Mammary epithelial cell (primary cell): ENCODE measurements at regions of chr7 and their contacts with region 1.

Region 1: GRCh38 chr7:102836191-102836919 is 76.4 kb upstream of the LRRC17 start:
- DNase-seq: peak; percentile 64
- H3K4me3 ChIP-seq: no peak overlapping the region
- H3K27ac ChIP-seq: no peak overlapping the region
- H3K4me1 ChIP-seq: peaks cover 24% of the 10 kb centered on the region
- H3K27me3 ChIP-seq: no peaks in the 10 kb centered on the region
- CTCF ChIP-seq: no peak

Region 2: DNA sequence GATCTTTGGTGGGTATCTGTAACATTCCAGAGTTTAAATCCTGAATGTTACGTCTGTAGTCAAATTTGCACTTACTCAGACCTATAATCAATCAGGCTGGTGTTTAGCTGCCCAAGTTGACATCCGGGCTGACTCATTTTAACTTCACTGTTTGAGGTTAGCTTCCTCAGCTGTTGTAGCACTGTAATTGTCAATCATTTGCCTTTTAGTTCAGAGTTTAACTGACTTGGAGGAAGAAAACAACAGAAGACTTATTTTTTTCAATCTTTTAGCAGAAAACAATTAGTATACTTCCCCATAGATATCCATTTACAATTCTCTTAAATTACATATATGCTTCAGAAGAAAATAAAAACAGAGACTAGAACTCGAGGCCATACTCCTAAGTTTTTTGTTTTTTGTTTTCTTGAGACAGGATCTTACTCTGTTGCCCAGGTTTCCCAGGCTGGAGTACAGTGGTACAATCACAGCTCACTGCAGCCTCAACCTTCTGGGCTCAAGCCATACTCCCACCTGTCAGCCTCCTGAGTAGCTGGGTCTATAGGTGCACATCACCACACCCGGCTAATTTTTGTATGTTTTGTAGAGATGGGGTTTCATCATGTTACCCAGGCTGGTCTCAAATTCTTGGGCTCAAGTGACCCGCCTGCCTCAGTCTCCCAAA is 37.9 kb after region 1 on chr7:
- CTCF ChIA-PET with region 1: no interaction called
- dilution Hi-C with region 1: no loop called
- in situ Hi-C with region 1: no loop called
- intact Hi-C with region 1: loop called (anchors 2 kb)
- DNase-seq: peak; percentile 82
- H3K4me3 ChIP-seq: no peak overlapping the region
- H3K27ac ChIP-seq: peak overlapping the region; percentile 93
- H3K4me1 ChIP-seq: peaks cover 52% of the 10 kb centered on the region
- H3K27me3 ChIP-seq: no peaks in the 10 kb centered on the region
- CTCF ChIP-seq: no peak

Region 3: GRCh38 chr7:103879411-103879810 is 1043.1 kb after region 1 on chr7:
- CTCF ChIA-PET with region 1: no interaction called
- dilution Hi-C with region 1: no loop called
- in situ Hi-C with region 1: no loop called
- intact Hi-C with region 1: no loop called
- DNase-seq: no peak
- H3K4me3 ChIP-seq: no peak overlapping the region
- H3K27ac ChIP-seq: no peak overlapping the region
- H3K4me1 ChIP-seq: no peaks in the 10 kb centered on the region
- H3K27me3 ChIP-seq: no peaks in the 10 kb centered on the region
- CTCF ChIP-seq: no peak